Right ventricle myocardium inferior (tissue), 1 donor: ENCODE measurements at regions of chr3 and their contacts with region 1.

Region 1: DNA sequence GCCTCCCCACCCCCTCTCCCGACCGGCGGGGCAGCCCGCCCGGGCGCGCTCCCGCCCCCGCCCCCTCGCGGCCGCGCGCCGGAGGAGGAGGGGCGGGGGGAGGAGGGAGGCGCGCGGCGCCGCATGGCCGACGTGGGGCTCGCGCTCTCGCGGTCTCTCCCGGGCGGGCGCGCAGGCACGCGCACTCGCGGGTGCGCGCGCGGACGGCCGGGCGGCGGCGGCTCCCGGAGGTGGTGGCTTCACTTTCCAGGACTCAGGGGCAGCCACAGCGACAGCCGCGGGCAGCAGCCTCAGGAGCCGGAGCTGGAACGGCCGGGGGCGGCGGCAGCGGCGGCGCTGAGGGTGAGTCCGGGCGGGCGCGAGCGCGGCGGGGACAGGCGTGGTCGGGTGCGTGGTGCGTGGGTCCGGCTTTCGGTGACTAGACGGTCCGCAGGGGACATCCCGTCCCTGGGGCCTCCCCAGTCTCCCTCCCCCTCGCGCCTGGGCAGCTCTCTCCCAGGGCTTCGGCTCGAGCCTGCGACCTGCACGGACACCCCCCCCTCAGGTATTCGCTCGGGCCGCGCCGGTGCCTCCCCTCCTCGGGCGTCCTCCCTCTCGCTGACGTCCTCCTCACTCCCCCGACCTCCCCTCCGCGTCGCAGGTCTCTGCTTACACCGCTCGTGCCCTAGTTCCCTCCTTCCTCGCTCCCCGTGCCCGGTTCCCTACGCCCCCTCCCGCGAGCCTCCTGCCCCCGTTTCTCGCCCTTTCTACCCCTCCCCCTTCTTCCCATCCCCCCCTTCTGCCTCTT is at the start of gene UBE2E2:
- DNase-seq: peak; percentile 84
- ATAC-seq: peak; percentile 91
- total RNA-seq, gene UBE2E2: 40.0 TPM

Region 2: GRCh38 chr3:23435318-23435717 is 232.2 kb after region 1 on chr3:
- intact Hi-C with region 1: loop called (anchors 10 kb)
- DNase-seq: no peak
- ATAC-seq: no peak

Region 3: GRCh38 chr3:23490459-23490858 is 287.3 kb after region 1 on chr3:
- intact Hi-C with region 1: loop called (anchors 10 kb)
- DNase-seq: no peak
- ATAC-seq: no peak

Region 4: DNA sequence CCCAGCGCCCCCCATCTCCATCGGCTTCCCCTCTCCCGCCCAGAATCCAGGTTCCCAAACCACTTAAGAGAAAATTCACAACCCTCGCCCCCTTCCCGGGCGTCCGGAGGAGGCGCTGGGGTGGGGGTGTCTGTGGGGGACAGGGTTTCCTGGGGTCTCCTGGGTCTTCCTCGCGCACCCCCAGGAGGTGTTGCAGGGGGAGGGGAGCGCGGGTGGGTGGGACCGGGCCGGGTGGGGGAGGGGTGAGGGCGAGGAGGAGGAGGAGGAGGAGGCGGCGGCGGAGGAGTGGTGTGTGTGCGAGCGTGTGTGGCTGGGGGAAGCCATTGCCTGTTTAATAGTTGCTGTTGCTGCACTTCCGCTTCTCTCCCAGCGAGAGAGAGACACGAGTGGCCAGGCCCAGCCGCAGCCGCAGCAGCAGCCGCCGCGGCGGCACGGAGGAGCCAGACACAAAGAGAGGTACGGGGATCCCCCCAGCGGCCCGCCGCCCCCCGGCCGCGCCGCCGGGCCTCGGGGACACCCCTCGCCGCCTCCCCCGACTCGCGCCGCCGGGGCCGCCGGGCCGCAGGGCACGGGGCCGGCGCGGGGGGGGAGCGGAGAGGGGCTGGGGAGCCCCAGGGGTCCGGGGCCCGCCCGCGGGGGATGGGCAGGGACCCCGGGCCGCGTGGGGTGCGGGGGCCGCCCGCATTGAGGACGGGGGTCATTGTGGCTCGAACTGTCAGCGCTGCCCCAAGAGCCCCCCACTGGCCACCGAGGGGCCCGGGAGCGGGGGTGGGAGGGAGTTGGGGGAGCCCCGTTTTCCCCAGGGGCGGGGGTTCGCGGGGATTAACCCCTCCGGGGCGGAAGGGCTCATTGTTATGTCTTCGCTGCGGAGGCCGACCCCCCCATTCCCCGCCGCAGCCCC is 602.8 kb after region 1 on chr3 and contains the start of gene UBE2E1:
- intact Hi-C with region 1: loop called (anchors 5 kb)
- DNase-seq: peak; percentile 91
- ATAC-seq: peak; percentile 81
- total RNA-seq, gene UBE2E1: 75.3 TPM

Region 5: GRCh38 chr3:23865595-23866450 is 662.7 kb after region 1 on chr3:
- intact Hi-C with region 1: loop called (anchors 5 kb)
- DNase-seq: no peak
- ATAC-seq: peak; percentile 29

Region 6: GRCh38 chr3:23945903-23946751 is 743.0 kb after region 1 on chr3:
- intact Hi-C with region 1: loop called (anchors 10 kb)
- DNase-seq: peak; percentile 100
- ATAC-seq: peak; percentile 93